Common myeloid progenitor, CD34-positive (primary cell): ENCODE measurements at regions of chr15 and their contacts with region 1.

Region 1: DNA sequence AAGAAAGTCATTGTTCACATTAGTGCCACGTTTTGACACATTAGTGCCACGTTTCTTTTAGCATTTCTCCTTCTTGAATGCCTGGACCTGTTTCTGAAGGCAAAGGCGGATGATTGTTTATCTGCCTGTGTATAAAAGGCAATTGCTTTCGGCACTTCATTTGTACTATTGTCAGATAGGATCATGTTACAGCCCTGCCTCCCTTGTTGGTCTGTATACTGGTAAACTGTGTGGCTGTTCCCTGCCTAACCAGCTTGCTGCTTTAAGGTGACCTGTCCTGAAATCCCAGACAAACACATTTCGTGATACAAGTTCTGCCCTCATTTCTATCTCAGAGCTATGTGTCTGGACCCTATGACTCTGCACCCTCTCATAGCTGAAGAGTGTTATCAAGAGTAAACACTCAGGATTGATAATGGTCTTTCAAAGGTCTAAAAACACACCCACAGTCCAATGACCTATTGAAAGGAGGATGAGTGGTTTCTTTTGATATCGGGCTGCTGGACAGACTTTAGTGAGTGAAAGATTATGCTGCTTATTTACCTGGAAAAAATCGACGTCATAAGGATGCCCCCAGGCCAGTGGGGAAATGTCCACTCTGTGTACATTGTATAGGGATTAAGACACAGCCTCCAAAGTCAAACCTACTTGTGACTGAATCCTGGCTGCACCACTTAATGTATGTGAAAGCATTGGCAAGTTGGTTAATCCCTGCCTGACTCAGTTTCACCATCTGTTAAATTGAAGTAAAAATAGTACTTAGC is 276.2 kb upstream of the MCTP2 start:
- DNase-seq: no peak
- H3K4me3 ChIP-seq: no peak overlapping the region
- H3K27ac ChIP-seq: no peak overlapping the region
- H3K4me1 ChIP-seq: no peaks in the 10 kb centered on the region
- H3K27me3 ChIP-seq: peaks cover 0 to 3% (median 0%) of the 10 kb centered on the region in 5 experiments

Region 2: GRCh38 chr15:93965304-93965908 is 10.2 kb after region 1 on chr15:
- CTCF ChIA-PET with region 1: interaction called, 12 read pairs
- POLR2A ChIA-PET with region 1: no interaction called
- DNase-seq: no peak
- H3K4me3 ChIP-seq: no peak overlapping the region
- H3K27ac ChIP-seq: no peak overlapping the region
- H3K4me1 ChIP-seq: no peaks in the 10 kb centered on the region
- H3K27me3 ChIP-seq: no peaks in the 10 kb centered on the region